Caco-2 (cell line): ENCODE measurements at regions of chr10 and their contacts with region 1.

Region 1: GRCh38 chr10:22988581-22989360 is 60.9 kb downstream of the ARMC3 start:
- DNase-seq: peak; percentile 57 to 79
- H3K4me3 ChIP-seq: no peak overlapping the region
- H3K4me3 Mint-ChIP-seq: peak overlapping the region; percentile 42
- H3K27ac Mint-ChIP-seq: no peak overlapping the region
- H3K4me1 ChIP-seq: peaks cover 8% of the 10 kb centered on the region
- H3K4me1 Mint-ChIP-seq: no peaks in the 10 kb centered on the region
- H3K27me3 ChIP-seq: no peaks in the 10 kb centered on the region
- H3K27me3 Mint-ChIP-seq: peaks cover 4% of the 10 kb centered on the region
- CTCF ChIP-seq: peak; percentile 95 to 97

Region 2: DNA sequence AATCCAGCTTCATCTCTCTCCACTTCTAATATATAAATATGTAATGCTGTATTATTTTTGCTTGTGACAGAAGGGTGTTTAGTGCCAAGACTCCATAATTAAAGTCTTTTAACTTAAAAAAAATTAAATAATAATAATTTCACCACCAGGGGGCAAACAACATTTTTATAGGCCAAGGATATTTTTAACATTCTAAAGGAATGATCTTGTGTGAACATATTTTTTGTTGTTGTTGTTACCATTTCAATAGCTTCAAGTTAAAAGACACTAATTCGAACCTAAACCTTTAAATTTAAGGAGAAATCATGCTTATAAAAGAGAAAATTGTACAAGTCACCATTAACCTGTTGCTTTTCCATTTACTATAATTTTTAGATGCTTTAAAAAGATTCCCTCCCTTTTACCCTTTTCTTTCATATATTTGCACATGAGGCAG is 977.8 kb before region 1 on chr10:
- CTCF ChIA-PET with region 1: no interaction called
- POLR2A ChIA-PET with region 1: no interaction called
- intact Hi-C with region 1: loop called (anchors 1 kb)
- DNase-seq: no peak
- H3K4me3 ChIP-seq: no peak overlapping the region
- H3K4me3 Mint-ChIP-seq: no peak overlapping the region
- H3K27ac Mint-ChIP-seq: no peak overlapping the region
- H3K4me1 ChIP-seq: no peaks in the 10 kb centered on the region
- H3K4me1 Mint-ChIP-seq: no peaks in the 10 kb centered on the region
- H3K27me3 ChIP-seq: no peaks in the 10 kb centered on the region
- H3K27me3 Mint-ChIP-seq: peaks cover 16% of the 10 kb centered on the region
- CTCF ChIP-seq: peak; percentile 37 to 76

Region 3: GRCh38 chr10:22340362-22341189 is 648.2 kb before region 1 on chr10:
- CTCF ChIA-PET with region 1: interaction called, 10 read pairs
- POLR2A ChIA-PET with region 1: no interaction called
- intact Hi-C with region 1: no loop called
- DNase-seq: peak; percentile 70 to 82
- H3K4me3 ChIP-seq: peak overlapping the region; percentile 74
- H3K4me3 Mint-ChIP-seq: peak overlapping the region; percentile 91
- H3K27ac Mint-ChIP-seq: peak overlapping the region; percentile 93
- H3K4me1 ChIP-seq: peaks cover 5% of the 10 kb centered on the region; the same call in 1 of the 2 replicates
- H3K4me1 Mint-ChIP-seq: peaks cover 7% of the 10 kb centered on the region
- H3K27me3 ChIP-seq: no peaks in the 10 kb centered on the region; the same call in 1 of the 2 replicates
- H3K27me3 Mint-ChIP-seq: peaks cover 5% of the 10 kb centered on the region
- CTCF ChIP-seq: no peak

Region 4: DNA sequence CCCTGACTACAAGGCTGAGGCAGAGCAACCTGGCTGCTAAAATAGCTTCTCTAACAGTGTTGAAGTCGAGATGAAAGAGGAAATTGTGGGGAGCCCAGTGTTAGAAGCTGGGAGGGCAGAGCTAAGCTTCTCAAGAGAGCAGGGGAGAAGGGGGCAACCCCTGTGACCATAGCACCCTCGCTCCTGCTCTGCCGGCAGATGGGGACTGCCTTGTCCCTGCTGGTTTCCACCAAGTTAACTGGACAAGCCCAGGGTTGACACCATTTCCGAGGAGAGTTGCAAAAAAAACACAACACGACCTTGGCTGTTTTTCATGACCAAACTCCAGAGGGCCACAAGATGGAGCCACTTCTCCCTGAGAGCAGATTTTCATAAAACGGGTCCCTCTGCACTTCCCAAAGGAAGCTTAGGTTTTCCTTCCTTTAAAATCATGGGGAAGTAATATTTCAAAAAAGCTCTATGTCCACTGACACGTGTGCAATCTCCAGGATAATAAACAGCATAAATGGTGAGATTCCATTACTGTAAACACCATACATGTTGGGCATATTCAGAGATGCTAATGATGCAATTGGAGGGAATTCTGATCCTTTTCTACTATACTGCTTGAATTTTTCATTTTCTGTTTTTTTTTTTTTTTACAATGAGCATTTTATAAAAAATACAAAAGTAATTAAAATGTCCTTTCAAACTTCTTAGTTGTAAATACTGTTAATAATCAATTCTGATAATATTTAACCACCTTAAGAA is 414.8 kb before region 1 on chr10:
- CTCF ChIA-PET with region 1: interaction called, 10 read pairs
- POLR2A ChIA-PET with region 1: no interaction called
- intact Hi-C with region 1: loop called (anchors 1 kb)
- DNase-seq: peak in 1 of 2 experiments; percentile 43
- H3K4me3 ChIP-seq: no peak overlapping the region
- H3K4me3 Mint-ChIP-seq: no peak overlapping the region
- H3K27ac Mint-ChIP-seq: no peak overlapping the region
- H3K4me1 ChIP-seq: no peaks in the 10 kb centered on the region
- H3K4me1 Mint-ChIP-seq: no peaks in the 10 kb centered on the region
- H3K27me3 ChIP-seq: no peaks in the 10 kb centered on the region
- H3K27me3 Mint-ChIP-seq: no peaks in the 10 kb centered on the region
- CTCF ChIP-seq: peak; percentile 56 to 73

Region 5: DNA sequence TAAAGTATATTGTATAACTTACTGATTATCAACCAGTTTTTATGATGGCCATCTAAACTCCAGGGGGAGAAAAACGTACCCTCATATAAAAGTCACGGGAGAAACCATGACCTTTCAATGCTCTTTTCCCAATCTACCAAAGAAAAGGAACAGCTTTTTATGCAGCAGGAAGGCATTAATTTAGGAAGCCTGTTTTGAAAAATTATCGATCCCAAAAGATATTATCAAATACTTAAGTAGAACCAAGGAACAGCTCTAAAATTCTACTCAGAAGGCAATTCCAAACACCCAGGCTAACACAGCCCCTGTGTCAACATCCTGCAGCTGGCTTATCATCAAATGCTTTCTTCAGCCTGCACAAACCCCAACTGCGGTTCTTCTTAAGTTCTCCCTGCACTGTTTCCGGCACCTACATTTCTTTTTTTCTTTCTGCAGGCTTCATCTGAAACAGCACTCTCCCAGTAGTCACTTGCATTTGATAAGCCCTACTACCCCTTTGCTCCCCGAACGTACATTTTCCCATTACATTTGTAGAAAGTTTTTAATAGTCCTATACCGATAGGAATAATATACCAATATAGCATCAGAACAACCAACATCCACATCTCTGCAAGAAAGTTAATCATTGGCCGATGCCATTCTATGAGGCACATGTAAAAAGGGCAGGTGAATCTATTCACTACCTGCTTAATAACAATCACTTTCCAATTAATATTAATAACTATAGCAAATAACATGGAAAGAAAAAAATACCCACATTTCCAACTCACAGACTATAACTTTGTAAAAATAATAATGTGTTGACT is 322.3 kb before region 1 on chr10:
- CTCF ChIA-PET with region 1: interaction called, 11 read pairs
- POLR2A ChIA-PET with region 1: no interaction called
- intact Hi-C with region 1: no loop called
- DNase-seq: peak; percentile 51 to 62
- H3K4me3 ChIP-seq: peak overlapping the region; percentile 26
- H3K4me3 Mint-ChIP-seq: peak overlapping the region; percentile 78
- H3K27ac Mint-ChIP-seq: peak overlapping the region; percentile 51
- H3K4me1 ChIP-seq: peaks cover 29% of the 10 kb centered on the region
- H3K4me1 Mint-ChIP-seq: peaks cover 16% of the 10 kb centered on the region
- H3K27me3 ChIP-seq: no peaks in the 10 kb centered on the region
- H3K27me3 Mint-ChIP-seq: no peaks in the 10 kb centered on the region
- CTCF ChIP-seq: no peak

Region 6: GRCh38 chr10:23067939-23068775 is 79.4 kb after region 1 on chr10:
- CTCF ChIA-PET with region 1: no interaction called
- POLR2A ChIA-PET with region 1: no interaction called
- intact Hi-C with region 1: loop called (anchors 1 kb)
- DNase-seq: peak; percentile 75 to 80
- H3K4me3 ChIP-seq: no peak overlapping the region
- H3K4me3 Mint-ChIP-seq: no peak overlapping the region
- H3K27ac Mint-ChIP-seq: no peak overlapping the region
- H3K4me1 ChIP-seq: no peaks in the 10 kb centered on the region
- H3K4me1 Mint-ChIP-seq: no peaks in the 10 kb centered on the region
- H3K27me3 ChIP-seq: no peaks in the 10 kb centered on the region
- H3K27me3 Mint-ChIP-seq: no peaks in the 10 kb centered on the region
- CTCF ChIP-seq: peak; percentile 91 to 94